Right cardiac atrium (tissue), 5 donors: ENCODE measurements at regions of chr2 and their contacts with region 1.

Region 1: DNA sequence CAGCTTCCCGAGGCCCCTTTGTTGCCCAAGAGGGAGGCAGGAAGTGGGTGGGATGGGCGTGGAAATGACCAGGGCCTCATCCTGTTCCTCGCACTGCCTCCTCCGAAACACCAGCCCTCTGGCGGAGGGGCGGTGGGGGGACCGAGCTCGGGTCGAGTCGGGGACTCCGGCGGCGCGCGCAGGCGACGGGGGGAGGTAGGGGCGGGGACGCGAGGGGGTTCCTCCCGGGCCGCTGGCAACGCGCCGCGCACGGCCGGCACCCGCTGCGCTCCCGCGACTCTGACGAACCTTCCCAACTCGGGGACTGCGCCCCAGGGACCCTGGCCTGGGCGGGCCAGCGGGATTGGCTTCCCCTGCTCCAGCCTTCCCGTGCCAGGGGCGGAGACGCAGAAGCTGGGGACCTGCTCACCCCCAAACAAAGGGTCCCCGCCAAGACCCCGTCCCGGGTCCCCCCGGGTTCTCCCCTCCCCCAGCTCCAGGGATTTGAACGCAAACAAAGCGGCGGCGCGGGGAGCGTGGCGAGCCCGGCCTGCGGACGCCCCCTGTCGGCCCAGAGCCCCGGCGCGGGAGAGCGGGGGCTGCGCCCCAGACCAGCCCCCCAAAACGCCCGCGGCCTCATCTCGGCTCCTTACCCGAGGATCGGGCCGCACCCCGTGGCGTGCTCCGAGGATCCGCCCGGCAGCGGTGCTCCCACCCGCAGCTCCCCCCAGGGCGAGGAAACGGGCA is 1.2 kb downstream of the SEMA4C start:
- DNase-seq: peak; percentile 95 to 97 (median 97)
- ATAC-seq: peak; percentile 82 to 84
- H3K4me3 ChIP-seq: peak overlapping the region; percentile 85
- H3K27ac ChIP-seq: peak overlapping the region; percentile 89
- H3K4me1 ChIP-seq: peaks cover 7% of the 10 kb centered on the region
- H3K27me3 ChIP-seq: no peaks in the 10 kb centered on the region

Region 2: GRCh38 chr2:95685513-95685912 is 1183.2 kb before region 1 on chr2:
- intact Hi-C with region 1: loop called in 1 of 4 experiments (anchors 10 kb)
- DNase-seq: no peak
- ATAC-seq: no peak
- H3K4me3 ChIP-seq: no peak overlapping the region
- H3K27ac ChIP-seq: no peak overlapping the region
- H3K4me1 ChIP-seq: no peaks in the 10 kb centered on the region
- H3K27me3 ChIP-seq: no peaks in the 10 kb centered on the region

Region 3: DNA sequence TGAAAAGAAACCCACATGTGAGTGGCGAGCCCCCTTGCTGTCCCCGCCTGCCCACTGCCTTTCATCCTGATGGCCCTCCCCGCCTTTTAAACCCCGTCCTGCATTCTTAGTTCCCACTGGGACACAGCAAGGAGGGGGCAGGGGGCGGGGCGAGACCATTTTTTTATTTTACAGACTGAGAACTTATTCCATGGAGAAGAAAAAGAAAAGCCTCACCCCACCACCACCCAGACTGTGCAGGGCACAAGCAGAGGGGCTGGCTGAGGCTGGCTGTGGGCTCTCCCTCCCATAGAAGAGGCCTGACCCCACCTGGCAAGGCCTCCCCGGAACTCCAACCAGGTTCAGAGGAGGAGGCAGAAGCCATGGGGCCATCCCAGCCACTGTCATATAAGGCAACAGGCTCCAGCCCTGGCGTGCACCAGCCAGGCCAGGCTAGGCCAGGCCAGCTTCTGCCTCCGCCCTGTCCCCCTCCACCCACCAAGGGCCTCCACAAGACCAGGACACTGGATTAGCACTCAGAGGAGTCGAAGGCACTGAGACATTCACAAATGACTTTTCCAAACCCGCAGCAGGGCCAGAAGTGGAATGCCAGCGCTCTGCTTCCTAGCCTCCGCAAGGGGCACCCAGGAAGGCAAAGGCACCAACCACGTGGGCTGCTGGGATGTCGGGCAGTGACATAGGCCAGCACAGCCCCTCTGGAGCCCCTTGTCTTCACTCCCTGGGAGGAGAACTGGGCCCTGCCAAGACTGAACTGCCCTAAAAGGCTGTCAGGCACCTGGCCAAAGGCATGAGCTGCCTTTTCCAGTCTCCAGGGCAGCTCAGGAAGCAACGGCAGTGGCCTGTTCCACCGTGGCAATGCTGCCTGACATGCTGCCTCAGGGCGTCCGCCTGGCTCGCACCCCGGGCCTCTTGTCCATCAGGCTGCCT is 38.7 kb after region 1 on chr2:
- intact Hi-C with region 1: loop called in 1 of 4 experiments (anchors 2 kb)
- DNase-seq: peak; percentile 90 to 95 (median 93)
- ATAC-seq: peak; percentile 96
- H3K4me3 ChIP-seq: no peak overlapping the region
- H3K27ac ChIP-seq: peak overlapping the region; percentile 80
- H3K4me1 ChIP-seq: peaks cover 7% of the 10 kb centered on the region
- H3K27me3 ChIP-seq: no peaks in the 10 kb centered on the region

Region 4: GRCh38 chr2:96951093-96951654 is 82.5 kb after region 1 on chr2:
- intact Hi-C with region 1: loop called in 2 of 4 experiments (anchors 5 kb)
- DNase-seq: peak; percentile 67 to 89 (median 89)
- ATAC-seq: peak; percentile 79 to 80
- H3K4me3 ChIP-seq: no peak overlapping the region
- H3K27ac ChIP-seq: no peak overlapping the region
- H3K4me1 ChIP-seq: peaks cover 7% of the 10 kb centered on the region
- H3K27me3 ChIP-seq: no peaks in the 10 kb centered on the region